ENCODE measurements at regions of chr10 and their contacts with region 1.

Region 1: GRCh38 chr10:73644015-73644743 is 2.9 kb upstream of the MYOZ1 start:
- H3K4me3 ChIP-seq: no peak overlapping the region
- H3K27ac ChIP-seq: no peak overlapping the region
- H3K4me1 ChIP-seq: no peaks in the 10 kb centered on the region
- CTCF ChIP-seq: peak; percentile 79

Region 2: GRCh38 chr10:73601486-73601921 is 42.7 kb before region 1 on chr10:
- CTCF ChIA-PET with region 1: interaction called, 11 read pairs
- POLR2A ChIA-PET with region 1: interaction called, 3 read pairs
- H3K4me3 ChIP-seq: no peak overlapping the region
- H3K27ac ChIP-seq: no peak overlapping the region
- H3K4me1 ChIP-seq: no peaks in the 10 kb centered on the region
- CTCF ChIP-seq: no peak

Region 3: GRCh38 chr10:73625884-73626752 is 18.1 kb before region 1 on chr10:
- CTCF ChIA-PET with region 1: interaction called, 28 read pairs
- POLR2A ChIA-PET with region 1: interaction called, 4 read pairs
- H3K4me3 ChIP-seq: peak overlapping the region; percentile 80
- H3K27ac ChIP-seq: peak overlapping the region; percentile 60
- H3K4me1 ChIP-seq: no peaks in the 10 kb centered on the region
- CTCF ChIP-seq: no peak

Region 4: DNA sequence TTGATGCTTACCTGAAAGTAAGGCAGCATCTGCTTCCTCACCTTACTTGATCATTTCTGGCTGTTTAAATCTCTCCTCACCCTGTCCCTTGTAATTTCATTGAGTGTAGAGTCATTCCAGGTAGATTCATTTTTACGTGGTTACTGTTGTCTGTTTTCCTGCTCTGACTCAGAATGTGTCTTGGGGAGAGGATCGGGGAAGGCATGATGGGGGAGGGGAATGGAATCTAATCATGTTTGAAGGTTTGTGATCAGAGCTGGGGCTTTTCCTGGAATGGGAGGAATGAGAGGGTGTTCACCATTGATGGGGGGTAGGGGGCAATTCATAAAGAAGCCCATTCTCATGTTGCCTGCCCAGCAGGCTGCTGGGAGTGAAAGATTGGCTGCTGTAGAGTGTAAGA is 118.7 kb after region 1 on chr10:
- CTCF ChIA-PET with region 1: no interaction called
- POLR2A ChIA-PET with region 1: no interaction called
- H3K4me3 ChIP-seq: no peak overlapping the region
- H3K27ac ChIP-seq: no peak overlapping the region
- H3K4me1 ChIP-seq: no peaks in the 10 kb centered on the region
- CTCF ChIP-seq: no peak

Measured in HEK293 (cell line).